Activated CD4-positive, alpha-beta memory T cell treated with anti-CD3 and anti-CD28 coated beads, Interleukin-2, amount 10 ng/mL, durations not matched to agents 7 days and 5 days (primary cell): ENCODE measurements at regions of chr17 and their contacts with region 1.

Region 1: GRCh38 chr17:36937966-36938565 is 791 bp downstream of the LHX1 start:
- DNase-seq: no peak
- H3K4me3 Mint-ChIP-seq: peak overlapping the region; percentile 53
- H3K27ac Mint-ChIP-seq: peak overlapping the region; percentile 61
- H3K4me1 Mint-ChIP-seq: peaks cover 57% of the 10 kb centered on the region
- H3K27me3 Mint-ChIP-seq: peaks cover 83% of the 10 kb centered on the region

Region 2: DNA sequence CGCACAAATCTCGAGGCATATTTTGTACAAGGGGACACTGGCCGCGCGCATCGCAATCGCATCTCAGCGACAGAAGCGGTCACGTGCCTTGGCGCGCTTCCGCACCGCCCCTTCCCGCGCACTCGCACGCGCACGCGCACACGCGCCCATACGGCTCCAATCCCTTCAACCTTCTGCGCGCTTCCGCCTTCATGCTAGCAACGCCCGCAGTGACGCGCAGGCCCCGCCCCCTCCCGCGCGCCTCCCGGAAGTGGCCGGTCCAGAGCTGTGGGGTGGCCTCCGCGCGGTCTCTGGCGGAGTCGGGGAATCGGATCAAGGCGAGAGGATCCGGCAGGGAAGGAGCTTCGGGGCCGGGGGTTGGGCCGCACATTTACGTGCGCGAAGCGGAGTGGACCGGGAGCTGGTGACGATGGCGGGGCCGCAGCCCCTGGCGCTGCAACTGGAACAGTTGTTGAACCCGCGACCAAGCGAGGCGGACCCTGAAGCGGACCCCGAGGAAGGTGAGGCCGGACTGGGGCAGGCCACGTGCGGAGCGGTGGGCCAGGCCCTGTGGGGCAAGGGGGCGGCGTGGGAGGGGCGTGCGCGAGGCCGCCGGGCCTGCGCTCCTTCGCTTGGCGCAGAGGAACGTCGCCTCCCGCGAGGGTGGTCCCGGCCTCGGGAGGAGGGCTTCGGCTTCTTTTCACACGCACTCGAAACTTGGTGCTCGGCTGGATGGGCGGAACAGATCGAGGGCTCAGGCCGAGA is 10.8 kb after region 1 on chr17 and contains the start of gene AATF:
- CTCF ChIA-PET with region 1: no interaction called
- POLR2A ChIA-PET with region 1: interaction called, 10 read pairs
- DNase-seq: peak; percentile 97
- H3K4me3 Mint-ChIP-seq: peak within 1 kb of the TSS; percentile 91
- H3K27ac Mint-ChIP-seq: peak within 1 kb of the TSS; percentile 89
- H3K4me1 Mint-ChIP-seq: peaks cover 49% of the 10 kb centered on the region
- H3K27me3 Mint-ChIP-seq: peaks cover 40% of the 10 kb centered on the region
- total RNA-seq, gene AATF: 76.7 to 78.8 TPM